PC-3 (cell line): ENCODE measurements at regions of chr3 and their contacts with region 1.

Region 1: DNA sequence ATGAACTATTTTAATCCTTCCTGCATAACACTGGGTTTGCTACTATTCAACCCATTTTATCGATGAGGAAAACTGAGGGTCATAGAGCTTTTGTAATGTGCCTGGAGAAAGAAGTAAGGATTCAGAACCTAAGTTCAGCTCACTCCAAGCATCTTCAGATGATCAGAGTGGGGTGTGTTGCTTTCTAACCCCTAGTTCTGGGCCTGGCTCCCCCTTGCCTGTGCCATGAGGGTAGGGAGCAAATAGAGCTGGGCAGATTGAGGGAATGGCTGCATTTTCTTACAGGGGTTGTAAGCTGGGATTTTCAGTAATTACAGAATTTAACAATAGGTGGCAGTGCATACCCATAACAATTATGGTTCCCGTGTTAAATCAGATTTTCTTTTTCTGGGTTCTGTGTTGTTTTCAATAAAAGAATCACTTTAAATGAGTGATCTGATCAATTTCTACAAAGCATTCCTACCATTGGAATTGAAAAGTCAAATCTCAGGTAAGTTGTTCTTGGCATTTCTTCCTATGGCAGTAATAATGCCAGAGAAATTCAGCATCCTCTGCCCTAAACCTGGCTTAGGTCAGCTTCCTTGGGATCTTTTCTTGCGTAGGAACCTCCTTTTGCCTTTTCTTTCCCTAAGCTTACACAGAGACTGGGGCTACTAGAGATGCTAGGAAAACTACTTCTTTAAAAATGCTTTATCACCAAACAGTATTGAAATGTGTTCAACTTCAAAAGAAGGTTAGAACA is 103.8 kb upstream of the IL12A start:
- DNase-seq: peak; percentile 78
- ATAC-seq: peak; percentile 36
- H3K4me3 ChIP-seq: no peak overlapping the region
- H3K27ac ChIP-seq: no peak overlapping the region
- H3K4me1 ChIP-seq: peaks cover 19% of the 10 kb centered on the region
- H3K27me3 ChIP-seq: no peaks in the 10 kb centered on the region
- CTCF ChIP-seq: peak; percentile 83

Region 2: GRCh38 chr3:159828542-159828943 is 56.3 kb before region 1 on chr3:
- CTCF ChIA-PET with region 1: interaction called, 4 read pairs
- POLR2A ChIA-PET with region 1: no interaction called
- intact Hi-C with region 1: loop called (anchors 1 kb)
- DNase-seq: peak; percentile 69
- ATAC-seq: peak; percentile 24; the same call in 1 of the 2 replicates
- H3K4me3 ChIP-seq: no peak overlapping the region
- H3K27ac ChIP-seq: no peak overlapping the region
- H3K4me1 ChIP-seq: peaks cover 39% of the 10 kb centered on the region
- H3K27me3 ChIP-seq: no peaks in the 10 kb centered on the region
- CTCF ChIP-seq: peak; percentile 77

Region 3: GRCh38 chr3:159919873-159920272 is 35.0 kb after region 1 on chr3:
- CTCF ChIA-PET with region 1: no interaction called
- POLR2A ChIA-PET with region 1: interaction called, 4 read pairs
- intact Hi-C with region 1: loop called (anchors 2 kb)
- DNase-seq: peak; percentile 96
- ATAC-seq: peak; percentile 90
- H3K4me3 ChIP-seq: no peak overlapping the region
- H3K27ac ChIP-seq: peak overlapping the region; percentile 88
- H3K4me1 ChIP-seq: peaks cover 28% of the 10 kb centered on the region
- H3K27me3 ChIP-seq: no peaks in the 10 kb centered on the region
- CTCF ChIP-seq: no peak

Region 4: DNA sequence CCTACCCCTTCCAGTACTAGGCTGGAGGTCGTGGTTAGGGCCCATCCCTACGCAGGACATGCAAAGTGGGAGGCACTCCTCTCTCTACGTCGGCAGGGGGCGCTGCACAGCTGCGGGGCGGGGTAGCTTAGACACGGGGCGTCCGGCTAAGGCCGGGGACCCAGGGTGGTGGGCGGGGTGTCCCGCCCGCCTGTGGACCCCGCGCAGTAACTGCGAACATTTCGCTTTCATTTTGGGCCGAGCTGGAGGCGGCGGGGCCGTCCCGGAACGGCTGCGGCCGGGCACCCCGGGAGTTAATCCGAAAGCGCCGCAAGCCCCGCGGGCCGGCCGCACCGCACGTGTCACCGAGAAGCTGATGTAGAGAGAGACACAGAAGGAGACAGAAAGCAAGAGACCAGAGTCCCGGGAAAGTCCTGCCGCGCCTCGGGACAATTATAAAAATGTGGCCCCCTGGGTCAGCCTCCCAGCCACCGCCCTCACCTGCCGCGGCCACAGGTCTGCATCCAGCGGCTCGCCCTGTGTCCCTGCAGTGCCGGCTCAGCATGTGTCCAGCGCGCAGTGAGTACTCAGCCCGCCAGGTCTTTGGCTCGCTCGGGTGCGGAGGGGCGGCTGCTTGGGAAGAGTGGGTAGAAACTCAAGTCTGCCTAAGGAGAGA is 103.9 kb after region 1 on chr3 and contains the start of gene IL12A:
- CTCF ChIA-PET with region 1: interaction called, 13 read pairs
- POLR2A ChIA-PET with region 1: interaction called, 3 read pairs
- intact Hi-C with region 1: loop called (anchors 1 kb)
- DNase-seq: peak; percentile 88
- ATAC-seq: peak; percentile 86
- H3K4me3 ChIP-seq: peak within 1 kb of the TSS; percentile 82
- H3K27ac ChIP-seq: peak within 1 kb of the TSS; percentile 25
- H3K4me1 ChIP-seq: peaks cover 17% of the 10 kb centered on the region
- H3K27me3 ChIP-seq: no peaks in the 10 kb centered on the region
- CTCF ChIP-seq: peak; percentile 98
- total RNA-seq, gene IL12A: 6.5 and 8.3 TPM in 2 replicates

Region 5: DNA sequence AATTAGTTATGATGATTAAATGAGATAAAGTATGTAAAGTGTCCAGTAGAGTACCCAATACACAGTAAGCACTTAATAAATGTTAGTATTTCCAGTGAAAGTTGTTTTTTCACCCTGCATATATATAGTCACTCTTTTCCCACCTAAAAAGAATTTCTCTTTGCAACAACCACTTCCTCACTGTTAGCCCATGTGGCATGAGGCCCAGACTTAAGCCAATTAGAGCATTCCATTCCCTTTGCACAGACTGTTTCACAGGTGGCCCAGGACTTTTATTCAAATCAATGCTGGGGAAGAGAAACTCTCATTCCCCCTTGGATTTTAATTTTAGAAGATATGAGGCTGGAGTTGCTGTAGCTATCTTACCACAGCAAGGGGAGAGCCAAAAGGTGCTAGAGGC is 510.5 kb after region 1 on chr3:
- CTCF ChIA-PET with region 1: no interaction called
- POLR2A ChIA-PET with region 1: no interaction called
- intact Hi-C with region 1: no loop called
- DNase-seq: peak; percentile 52
- ATAC-seq: peak; percentile 9; the same call in 1 of the 2 replicates
- H3K4me3 ChIP-seq: no peak overlapping the region
- H3K27ac ChIP-seq: no peak overlapping the region
- H3K4me1 ChIP-seq: peaks cover 17% of the 10 kb centered on the region
- H3K27me3 ChIP-seq: no peaks in the 10 kb centered on the region
- CTCF ChIP-seq: no peak